BJ (cell line): ENCODE measurements at regions of chr15 and their contacts with region 1.

Region 1: GRCh38 chr15:75508840-75509532 is 57.5 kb upstream of the SIN3A start:
- DNase-seq: peak; percentile 8
- H3K4me3 ChIP-seq: no peak overlapping the region
- H3K27me3 ChIP-seq: no peaks in the 10 kb centered on the region
- CTCF ChIP-seq: peak; percentile 64

Region 2: GRCh38 chr15:75493732-75494131 is 15.3 kb before region 1 on chr15:
- CTCF ChIA-PET with region 1: interaction called, 21 read pairs
- POLR2A ChIA-PET with region 1: no interaction called
- DNase-seq: no peak
- H3K4me3 ChIP-seq: no peak overlapping the region
- H3K27me3 ChIP-seq: no peaks in the 10 kb centered on the region
- CTCF ChIP-seq: no peak

Region 3: GRCh38 chr15:75625542-75626347 is 116.8 kb after region 1 on chr15 and contains the start of gene SNUPN:
- CTCF ChIA-PET with region 1: interaction called, 14 read pairs
- POLR2A ChIA-PET with region 1: no interaction called
- DNase-seq: peak; percentile 41
- H3K4me3 ChIP-seq: peak within 1 kb of the TSS; percentile 95
- H3K27me3 ChIP-seq: no peaks in the 10 kb centered on the region
- CTCF ChIP-seq: no peak
- polyA plus RNA-seq, gene SNUPN: 25.4 and 33.9 TPM in 2 replicates